Gastrocnemius medialis (tissue), 4 donors: ENCODE measurements at regions of chr5 and their contacts with region 1.

Region 1: GRCh38 chr5:181191529-181192394 is 13.2 kb downstream of the TRIM7 start:
- DNase-seq: peak; percentile 90 to 92
- ATAC-seq: peak; percentile 73 to 84
- H3K4me3 ChIP-seq: peak overlapping the region; percentile 67 to 97 (median 77)
- H3K27ac ChIP-seq: peak overlapping the region; percentile 89 to 98 (median 93)
- H3K4me1 ChIP-seq: peaks cover 14 to 22% of the 10 kb centered on the region in 2 donors
- H3K27me3 ChIP-seq: no peaks in the 10 kb centered on the region
- CTCF ChIP-seq: peak in 1 of 5 experiments; percentile 11
- POLR2A ChIP-seq: peak; percentile 57 to 78

Region 2: GRCh38 chr5:179832083-179832745 is 1359.5 kb before region 1 on chr5:
- in situ Hi-C with region 1: no loop called
- intact Hi-C with region 1: loop called (anchors 5 kb)
- DNase-seq: no peak
- ATAC-seq: peak in 1 of 2 donors; percentile 1
- H3K4me3 ChIP-seq: no peak overlapping the region
- H3K27ac ChIP-seq: peak overlapping the region; percentile 61 to 100 (median 71)
- H3K4me1 ChIP-seq: peaks cover 37 to 53% of the 10 kb centered on the region in 2 donors
- H3K27me3 ChIP-seq: no peaks in the 10 kb centered on the region
- CTCF ChIP-seq: no peak
- POLR2A ChIP-seq: no peak

Region 3: GRCh38 chr5:181121659-181122561 is 69.9 kb before region 1 on chr5:
- in situ Hi-C with region 1: no loop called
- intact Hi-C with region 1: no loop called
- DNase-seq: no peak
- ATAC-seq: no peak
- H3K4me3 ChIP-seq: no peak overlapping the region
- H3K27ac ChIP-seq: no peak overlapping the region
- H3K4me1 ChIP-seq: no peaks in the 10 kb centered on the region
- H3K27me3 ChIP-seq: peaks cover 23 to 27% (median 23%) of the 10 kb centered on the region in 3 donors
- CTCF ChIP-seq: peak in 1 of 5 experiments; percentile 9
- POLR2A ChIP-seq: no peak

Region 4: DNA sequence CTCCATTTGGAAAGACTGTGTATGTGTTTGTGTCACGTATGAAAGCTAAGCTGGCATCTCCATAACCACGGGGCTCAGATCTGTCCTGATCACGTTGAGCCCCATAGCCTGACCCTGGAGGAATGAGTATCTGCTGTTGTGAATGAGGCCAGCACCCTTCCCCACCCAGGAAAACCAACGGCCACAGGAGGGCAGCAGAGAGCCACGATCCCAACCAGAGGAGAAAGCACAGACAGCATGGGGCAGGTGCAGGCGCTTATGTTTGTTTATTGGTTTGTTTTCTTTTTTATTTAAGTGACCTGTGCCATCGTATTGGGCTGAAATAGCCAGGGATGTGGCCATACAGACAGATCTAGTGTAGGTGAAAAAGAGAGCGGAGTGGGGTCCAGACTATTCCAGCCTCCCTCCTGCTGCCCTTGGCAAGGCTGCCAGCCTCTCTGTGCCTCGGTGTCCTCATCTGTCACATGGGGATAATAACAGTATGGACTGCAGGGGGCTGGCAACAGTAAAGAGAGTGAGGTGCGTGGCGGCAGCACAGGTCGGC is 32.4 kb before region 1 on chr5:
- in situ Hi-C with region 1: no loop called
- intact Hi-C with region 1: loop called (anchors 1 kb)
- DNase-seq: peak; percentile 57 to 74
- ATAC-seq: peak; percentile 93 to 95
- H3K4me3 ChIP-seq: no peak overlapping the region
- H3K27ac ChIP-seq: peak overlapping the region in 1 of 4 donors; percentile 72
- H3K4me1 ChIP-seq: no peaks in the 10 kb centered on the region
- H3K27me3 ChIP-seq: peaks cover 0 to 2% (median 1%) of the 10 kb centered on the region in 3 donors
- CTCF ChIP-seq: peak; percentile 60 to 91 (median 81)
- POLR2A ChIP-seq: no peak

Region 5: DNA sequence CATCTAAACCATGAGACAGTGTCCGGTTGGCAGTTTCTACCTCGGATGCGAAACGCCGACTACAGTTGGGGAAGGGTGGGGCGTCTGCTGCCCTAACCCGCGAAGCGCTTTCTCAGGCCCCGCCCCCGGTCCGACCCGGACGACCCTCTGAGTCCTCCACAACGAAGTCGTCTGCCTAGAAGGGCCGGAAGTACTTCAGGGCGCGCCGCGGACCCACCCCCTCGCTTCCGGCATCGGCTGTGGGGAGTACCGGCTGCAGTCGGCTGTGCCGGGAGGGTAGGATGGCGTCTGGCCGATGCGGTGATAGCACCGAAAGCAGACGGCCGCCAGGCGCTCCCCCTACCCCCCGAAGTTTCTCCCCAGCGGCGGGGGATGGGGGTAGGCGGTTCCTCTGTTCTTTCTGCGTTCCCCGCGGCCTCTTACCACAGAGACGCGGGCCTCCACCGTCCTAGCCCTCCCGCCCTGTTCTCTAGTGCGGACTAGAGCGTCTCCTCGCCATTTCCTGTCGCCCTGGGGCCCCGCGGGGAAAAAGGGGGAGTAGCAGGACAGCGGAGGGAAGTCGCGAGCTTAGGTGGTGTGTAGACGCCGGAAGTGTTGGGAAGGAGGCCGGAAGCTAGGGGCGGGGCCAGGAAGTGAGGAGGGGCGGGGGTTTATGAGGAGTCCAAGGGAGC is 31.4 kb after region 1 on chr5 and contains the start of gene TRIM41:
- in situ Hi-C with region 1: no loop called
- intact Hi-C with region 1: loop called (anchors 1 kb)
- DNase-seq: peak; percentile 98 to 99
- ATAC-seq: peak; percentile 82
- H3K4me3 ChIP-seq: peak within 1 kb of the TSS; percentile 76 to 95 (median 78)
- H3K27ac ChIP-seq: peak within 1 kb of the TSS; percentile 90 to 97 (median 92)
- H3K4me1 ChIP-seq: peaks cover 23 to 26% of the 10 kb centered on the region in 2 donors
- H3K27me3 ChIP-seq: no peaks in the 10 kb centered on the region
- CTCF ChIP-seq: peak in 1 of 5 experiments; percentile 3
- POLR2A ChIP-seq: peak; percentile 88 to 95
- total RNA-seq, gene TRIM41: 15.6 to 23.5 (median 21.6) TPM

Region 6: GRCh38 chr5:181234455-181235306 is 42.9 kb after region 1 on chr5:
- in situ Hi-C with region 1: no loop called
- intact Hi-C with region 1: no loop called
- DNase-seq: no peak
- ATAC-seq: no peak
- H3K4me3 ChIP-seq: no peak overlapping the region
- H3K27ac ChIP-seq: peak overlapping the region in 1 of 4 donors; percentile 20
- H3K4me1 ChIP-seq: no peaks in the 10 kb centered on the region
- H3K27me3 ChIP-seq: no peaks in the 10 kb centered on the region
- CTCF ChIP-seq: no peak
- POLR2A ChIP-seq: no peak

Region 7: GRCh38 chr5:181260387-181261319 is 68.9 kb after region 1 on chr5 and contains the start of gene TRIM52:
- in situ Hi-C with region 1: loop called in 2 of 4 experiments (anchors 10 kb)
- intact Hi-C with region 1: loop called (anchors 1 kb)
- DNase-seq: peak; percentile 89 to 92
- ATAC-seq: peak; percentile 81 to 89
- H3K4me3 ChIP-seq: peak within 1 kb of the TSS; percentile 88 to 100 (median 94)
- H3K27ac ChIP-seq: peak within 1 kb of the TSS; percentile 95 to 100 (median 99)
- H3K4me1 ChIP-seq: peaks cover 53 to 60% of the 10 kb centered on the region in 2 donors
- H3K27me3 ChIP-seq: no peaks in the 10 kb centered on the region
- CTCF ChIP-seq: no peak
- POLR2A ChIP-seq: peak; percentile 96
- total RNA-seq, gene TRIM52: 1.3 to 4.9 (median 3.4) TPM